PC-9 (cell line): ENCODE measurements at regions of chr1 and their contacts with region 1.

Region 1: DNA sequence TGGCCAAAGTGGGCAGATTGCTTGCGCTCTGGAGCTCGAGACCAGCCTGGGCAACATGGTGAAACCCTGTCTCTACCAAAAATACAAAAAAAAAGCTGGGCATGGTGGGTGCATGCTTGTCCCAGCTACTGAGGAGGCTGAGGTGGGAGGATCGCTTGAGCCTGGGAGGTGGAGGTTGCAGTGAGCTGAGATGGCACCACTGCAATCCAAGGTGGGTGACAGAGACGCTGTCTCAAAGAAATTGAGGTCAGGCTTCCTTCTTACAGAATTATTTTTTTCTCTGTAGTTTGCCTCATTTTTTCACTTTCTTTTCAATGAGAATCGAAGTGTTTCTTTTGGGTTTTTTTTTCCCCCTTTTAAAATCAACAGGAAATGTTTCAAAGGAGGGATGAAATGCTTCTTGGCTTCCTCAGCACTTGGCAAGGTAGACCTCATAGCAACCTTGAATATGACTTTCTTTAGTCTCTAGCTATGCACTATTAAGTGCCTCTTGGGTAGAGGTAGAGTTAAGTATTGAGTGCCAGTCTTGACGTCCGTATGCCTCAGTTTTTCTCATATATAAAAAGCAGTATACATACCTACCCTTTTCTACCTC is 40.3 kb downstream of the MDM4 start:
- DNase-seq: no peak
- H3K4me3 ChIP-seq: no peak overlapping the region
- H3K27ac ChIP-seq: no peak overlapping the region
- H3K4me1 ChIP-seq: no peaks in the 10 kb centered on the region
- H3K27me3 ChIP-seq: no peaks in the 10 kb centered on the region
- CTCF ChIP-seq: no peak

Region 2: DNA sequence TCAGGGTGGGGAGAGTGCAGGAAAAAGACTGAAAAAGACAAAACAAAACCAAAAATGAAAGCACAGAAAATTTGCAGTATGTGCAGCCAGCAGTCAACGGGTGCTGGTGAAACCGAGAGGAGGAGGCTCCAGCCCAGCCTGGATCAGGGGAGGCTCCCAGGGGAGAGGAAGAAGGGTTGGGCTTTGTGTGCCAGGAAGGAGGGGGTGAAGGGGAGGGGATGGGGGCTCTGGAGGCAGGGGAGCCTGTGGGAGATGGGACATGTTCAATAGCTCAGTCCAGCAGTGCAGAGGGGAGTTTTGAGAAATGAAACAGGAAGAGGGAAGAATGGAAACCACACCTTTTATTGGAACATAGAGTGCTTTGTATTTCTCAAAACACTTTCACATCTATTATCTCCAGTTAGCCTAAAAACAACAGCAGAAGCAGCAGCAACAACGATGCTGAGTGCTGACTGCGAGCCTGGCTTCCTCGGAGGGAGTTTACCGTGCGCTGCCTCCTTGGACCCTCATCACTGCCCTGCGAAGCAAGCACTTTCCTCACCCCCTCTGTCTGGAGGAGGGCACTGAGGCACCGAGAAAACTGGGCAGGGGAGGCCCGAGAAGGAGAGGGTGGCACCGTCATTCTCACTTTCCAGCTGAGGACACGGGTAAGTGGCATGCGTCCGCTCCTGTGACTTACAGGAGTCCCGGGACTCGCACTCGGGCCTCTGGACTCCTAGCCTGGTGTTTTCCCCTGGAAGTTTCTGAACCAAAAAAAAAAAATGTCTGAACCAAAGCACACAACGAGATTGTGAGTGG is 22.5 kb after region 1 on chr1:
- CTCF ChIA-PET with region 1: interaction called, 19 read pairs
- POLR2A ChIA-PET with region 1: no interaction called
- intact Hi-C with region 1: no loop called
- DNase-seq: no peak
- H3K4me3 ChIP-seq: no peak overlapping the region
- H3K27ac ChIP-seq: no peak overlapping the region
- H3K4me1 ChIP-seq: peaks cover 6% of the 10 kb centered on the region
- H3K27me3 ChIP-seq: no peaks in the 10 kb centered on the region
- CTCF ChIP-seq: no peak